ENCODE measurements at regions of chr20 and their contacts with region 1.

Region 1: DNA sequence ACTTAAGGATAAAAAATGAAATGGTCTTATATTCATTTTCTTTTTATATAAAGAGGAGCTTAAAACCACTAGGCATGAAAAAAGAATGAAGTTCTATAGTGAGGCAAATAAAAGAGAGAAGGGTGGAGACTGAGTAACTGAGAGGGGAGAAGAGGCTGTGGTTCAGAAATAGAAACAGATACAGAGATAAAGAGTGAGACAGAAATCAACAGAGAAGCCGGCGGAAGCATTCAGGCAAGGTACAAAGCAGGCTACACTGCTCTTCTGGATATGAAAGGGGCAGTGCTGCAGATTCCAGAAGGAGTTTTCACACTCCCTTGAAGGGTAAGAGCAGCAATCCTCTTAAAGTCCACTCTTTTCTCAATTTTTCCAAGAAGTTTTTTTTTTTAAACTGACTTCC is 29.9 kb downstream of the NFATC2 start:
- DNase-seq: peak in 1 of 2 donors; percentile 59
- ATAC-seq: peak; percentile 64 to 68 (median 65)
- H3K4me3 ChIP-seq: no peak overlapping the region
- H3K4me3 Mint-ChIP-seq: peak overlapping the region; percentile 70
- H3K27ac ChIP-seq: peak overlapping the region; percentile 64
- H3K27ac Mint-ChIP-seq: peak overlapping the region; percentile 82 to 95
- H3K4me1 ChIP-seq: peaks cover 58% of the 10 kb centered on the region
- H3K4me1 Mint-ChIP-seq: peaks cover 91% of the 10 kb centered on the region in 2 donors
- H3K27me3 ChIP-seq: no peaks in the 10 kb centered on the region
- H3K27me3 Mint-ChIP-seq: no peaks in the 10 kb centered on the region
- CTCF ChIP-seq: no peak

Region 2: DNA sequence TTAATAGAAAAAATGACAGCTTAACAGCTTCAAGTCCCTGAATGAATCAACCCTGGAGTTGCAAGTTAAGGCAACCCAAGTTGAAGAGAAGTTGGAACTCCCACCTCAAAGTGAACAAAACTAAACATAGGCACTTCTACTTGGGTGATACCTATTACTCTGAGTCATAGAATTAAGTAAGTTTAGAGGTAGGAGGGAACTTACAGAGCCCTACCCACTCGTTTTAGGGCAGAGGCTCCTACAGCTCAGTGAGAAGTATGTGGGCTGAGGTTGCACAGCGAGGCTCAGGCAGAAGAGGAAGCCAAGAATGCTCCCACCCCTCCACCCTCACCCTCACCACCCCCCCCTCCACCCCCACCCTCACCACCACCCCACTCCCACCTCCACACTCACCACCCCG is 12.3 kb before region 1 on chr20:
- intact Hi-C with region 1: loop called (anchors 2 kb)
- DNase-seq: peak; percentile 49 to 86
- ATAC-seq: peak; percentile 79 to 90 (median 83)
- H3K4me3 ChIP-seq: no peak overlapping the region
- H3K4me3 Mint-ChIP-seq: peak overlapping the region; percentile 88
- H3K27ac ChIP-seq: peak overlapping the region; percentile 87
- H3K27ac Mint-ChIP-seq: peak overlapping the region; percentile 95 to 99
- H3K4me1 ChIP-seq: peaks cover 82% of the 10 kb centered on the region
- H3K4me1 Mint-ChIP-seq: peaks cover 92 to 93% of the 10 kb centered on the region in 2 donors
- H3K27me3 ChIP-seq: no peaks in the 10 kb centered on the region
- H3K27me3 Mint-ChIP-seq: no peaks in the 10 kb centered on the region
- CTCF ChIP-seq: no peak

Region 3: GRCh38 chr20:51525241-51526129 is 12.8 kb after region 1 on chr20:
- intact Hi-C with region 1: loop called (anchors 1 kb)
- DNase-seq: peak; percentile 74 to 79
- ATAC-seq: peak; percentile 69 to 89 (median 85)
- H3K4me3 ChIP-seq: no peak overlapping the region
- H3K4me3 Mint-ChIP-seq: peak overlapping the region; percentile 72
- H3K27ac ChIP-seq: peak overlapping the region; percentile 90
- H3K27ac Mint-ChIP-seq: peak overlapping the region; percentile 95 to 100
- H3K4me1 ChIP-seq: peaks cover 65% of the 10 kb centered on the region
- H3K4me1 Mint-ChIP-seq: peaks cover 82 to 86% of the 10 kb centered on the region in 2 donors
- H3K27me3 ChIP-seq: no peaks in the 10 kb centered on the region
- H3K27me3 Mint-ChIP-seq: no peaks in the 10 kb centered on the region
- CTCF ChIP-seq: no peak